Sciatic nerve (tissue), 2 donors: ENCODE measurements at regions of chr7 and their contacts with region 1.

Region 1: DNA sequence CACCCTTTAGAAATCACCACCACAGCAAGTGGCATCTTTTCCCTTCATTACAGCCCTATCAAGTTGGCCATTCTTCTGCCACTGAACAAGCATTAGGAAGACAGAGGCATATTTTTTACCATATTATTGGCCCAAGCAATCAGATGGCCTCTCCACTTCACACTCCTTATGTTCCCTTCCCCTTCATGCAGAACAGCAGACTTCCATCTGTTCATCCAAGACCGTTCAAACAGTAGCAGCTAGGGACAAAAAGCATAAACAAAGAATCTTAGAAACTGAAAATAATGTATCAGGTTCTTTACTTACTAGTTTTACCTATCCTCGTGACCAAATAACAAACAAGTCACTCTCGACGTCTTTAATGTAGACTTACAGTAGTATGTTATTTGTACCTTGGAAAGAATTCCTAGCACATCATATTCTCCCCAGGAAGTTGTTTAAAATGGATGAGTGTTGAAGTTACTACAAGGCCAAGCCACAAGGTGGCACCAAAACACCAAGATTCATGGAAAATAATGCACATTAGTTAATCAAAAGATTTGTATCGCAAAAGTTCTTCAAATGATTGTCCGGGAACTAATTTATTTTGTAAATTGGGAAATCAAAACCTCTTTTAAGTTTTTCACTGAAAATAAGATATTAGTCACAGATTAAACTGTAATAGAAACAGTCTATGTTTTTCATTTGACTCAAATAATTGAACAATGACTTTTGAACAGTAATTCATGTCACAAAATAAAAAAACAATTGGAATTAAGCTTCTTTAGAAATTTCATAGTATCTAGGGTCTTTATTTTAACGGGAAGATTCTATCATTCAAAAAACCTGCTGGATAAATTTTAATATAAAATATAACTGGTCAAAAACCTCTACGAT is 112.1 kb downstream of the VPS41 start:
- DNase-seq: peak; percentile 73
- ATAC-seq: peak; percentile 57

Region 2: GRCh38 chr7:38716397-38716796 is 80.5 kb before region 1 on chr7:
- intact Hi-C with region 1: no loop called
- DNase-seq: no peak
- ATAC-seq: no peak

Region 3: DNA sequence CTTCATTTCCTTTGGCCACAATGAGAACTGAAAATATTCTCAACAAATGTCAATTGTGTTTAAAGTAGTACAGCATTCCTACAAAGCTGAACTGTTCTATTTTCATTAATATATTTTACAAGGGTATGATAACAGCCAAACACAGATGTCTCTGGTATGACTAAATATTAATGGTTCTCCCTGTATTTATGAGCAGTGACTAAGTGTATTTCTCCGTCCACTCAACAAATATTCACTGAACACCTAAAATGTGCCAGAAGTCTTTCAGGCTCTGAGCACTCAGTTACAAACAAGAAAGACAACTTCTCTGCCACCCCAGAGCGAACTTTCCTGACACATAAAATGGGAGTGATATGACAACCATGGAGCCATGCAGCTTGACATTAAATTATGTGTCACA is 23.4 kb before region 1 on chr7:
- intact Hi-C with region 1: loop called (anchors 1 kb)
- DNase-seq: no peak
- ATAC-seq: no peak

Region 4: DNA sequence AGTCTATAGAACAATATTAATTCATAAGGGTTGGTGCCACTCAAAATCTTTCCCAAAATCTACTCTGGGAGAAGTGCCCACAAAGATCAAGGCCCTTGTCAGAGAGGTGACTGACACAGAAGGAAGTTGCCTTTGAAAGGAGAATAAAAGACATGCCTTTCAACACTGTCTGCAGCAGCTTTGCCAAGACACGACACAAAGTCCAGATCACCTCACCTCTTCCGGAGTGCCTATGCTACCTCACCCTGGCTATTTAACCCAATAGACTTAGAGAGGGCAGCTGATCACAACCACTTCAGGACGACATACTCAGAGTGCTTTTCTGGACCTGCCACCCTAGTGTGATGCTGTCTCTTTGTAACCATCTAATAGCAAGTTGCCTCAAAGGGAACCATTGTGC is 720.4 kb after region 1 on chr7:
- intact Hi-C with region 1: loop called (anchors 5 kb)
- DNase-seq: no peak
- ATAC-seq: no peak